GM12878 (cell line): ENCODE measurements at regions of chr6 and their contacts with region 1.

Region 1: DNA sequence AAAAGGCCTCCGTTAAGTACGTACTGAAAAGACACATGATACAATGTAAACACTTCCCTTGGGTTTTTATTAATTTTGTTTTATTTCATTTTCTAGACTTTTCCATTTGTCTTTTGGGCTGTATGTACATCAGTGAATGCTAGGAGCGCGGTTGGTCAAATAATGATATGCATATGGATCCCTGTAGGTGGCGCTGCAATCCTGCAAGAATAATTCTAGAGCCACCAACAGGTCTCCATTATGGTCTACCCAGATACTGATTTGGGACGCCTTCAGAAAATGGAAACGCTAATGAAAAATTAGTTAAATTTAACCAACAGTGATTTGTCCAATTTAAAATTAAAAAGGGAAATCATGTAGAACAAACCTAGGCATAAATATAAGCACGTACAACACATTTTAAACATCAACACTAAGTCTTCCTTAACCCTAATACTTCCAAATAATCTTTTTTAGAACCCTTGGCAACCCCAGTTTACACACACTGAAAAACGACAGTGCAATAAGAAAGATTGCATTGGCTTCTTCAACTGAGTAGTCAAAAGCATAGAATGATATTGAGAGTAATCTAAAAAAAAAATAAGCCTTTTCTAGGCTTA is 433.5 kb downstream of the RFPL4B start:
- DNase-seq: peak; percentile 24
- ATAC-seq: peak; percentile 99
- H3K4me3 ChIP-seq: no peak overlapping the region
- H3K27ac ChIP-seq: no peak overlapping the region
- H3K4me1 ChIP-seq: no peaks in the 10 kb centered on the region
- H3K27me3 ChIP-seq: no peaks in the 10 kb centered on the region
- CTCF ChIP-seq: peak; percentile 67 to 82 (median 69)
- EP300 ChIP-seq: no peak
- POLR2A ChIP-seq: no peak
- RAD21 ChIP-seq: peak; percentile 95

Region 2: GRCh38 chr6:112407101-112407590 is 373.5 kb before region 1 on chr6:
- CTCF ChIA-PET with region 1: no interaction called
- POLR2A ChIA-PET with region 1: no interaction called
- RAD21 ChIA-PET with region 1: no interaction called
- SMC1A ChIA-PET with region 1: no interaction called
- in situ Hi-C with region 1: no loop called
- intact Hi-C with region 1: no loop called
- DNase-seq: no peak
- ATAC-seq: no peak
- H3K4me3 ChIP-seq: no peak overlapping the region
- H3K27ac ChIP-seq: no peak overlapping the region
- H3K4me1 ChIP-seq: no peaks in the 10 kb centered on the region
- H3K27me3 ChIP-seq: no peaks in the 10 kb centered on the region
- CTCF ChIP-seq: no peak
- EP300 ChIP-seq: no peak
- POLR2A ChIP-seq: no peak
- RAD21 ChIP-seq: no peak

Region 3: DNA sequence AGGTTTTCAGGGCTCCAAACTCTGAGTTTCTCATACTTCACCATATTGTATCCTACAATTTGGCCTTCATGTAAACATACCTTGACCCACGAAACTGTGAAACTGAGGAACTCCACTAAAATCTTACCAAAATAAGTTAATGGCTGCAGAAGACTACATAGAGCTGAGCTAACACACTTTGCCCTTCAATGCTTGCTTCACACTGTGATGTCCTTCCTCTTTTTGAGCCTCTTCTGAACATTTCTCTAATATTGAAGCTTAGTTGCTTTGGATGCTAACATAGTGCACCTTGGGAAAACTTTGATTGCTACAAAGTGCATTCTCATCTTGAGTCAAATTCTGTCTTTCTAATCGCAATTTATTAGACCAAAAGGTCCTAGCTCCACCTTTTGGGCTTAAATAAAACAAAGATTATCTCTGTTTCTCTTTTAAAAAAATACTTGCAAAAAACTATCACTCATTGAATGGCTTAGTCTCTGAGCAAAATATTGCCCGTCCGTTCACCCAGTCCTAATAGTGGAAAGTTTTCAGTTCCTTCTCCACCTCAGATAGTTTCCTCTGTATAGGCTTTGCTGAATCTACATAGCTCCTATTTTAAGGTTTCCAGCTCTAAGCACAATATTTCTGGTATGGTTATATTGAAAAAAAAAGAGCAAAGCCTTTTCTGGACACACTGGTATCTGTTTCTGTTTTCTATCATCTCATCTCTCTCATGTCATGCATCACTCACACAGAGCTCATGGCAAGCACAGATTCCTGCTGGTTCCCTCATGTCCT is 61.1 kb after region 1 on chr6:
- CTCF ChIA-PET with region 1: interaction called, 3 read pairs
- POLR2A ChIA-PET with region 1: no interaction called
- RAD21 ChIA-PET with region 1: interaction called, 10 read pairs
- SMC1A ChIA-PET with region 1: interaction called, 4 read pairs
- in situ Hi-C with region 1: no loop called
- intact Hi-C with region 1: no loop called
- DNase-seq: peak; percentile 9
- ATAC-seq: peak; percentile 69
- H3K4me3 ChIP-seq: no peak overlapping the region
- H3K27ac ChIP-seq: peak overlapping the region; percentile 24; the same call in 1 of the 2 replicates
- H3K4me1 ChIP-seq: peaks cover 14% of the 10 kb centered on the region
- H3K27me3 ChIP-seq: no peaks in the 10 kb centered on the region
- CTCF ChIP-seq: no peak
- EP300 ChIP-seq: no peak
- POLR2A ChIP-seq: no peak
- RAD21 ChIP-seq: no peak

Region 4: DNA sequence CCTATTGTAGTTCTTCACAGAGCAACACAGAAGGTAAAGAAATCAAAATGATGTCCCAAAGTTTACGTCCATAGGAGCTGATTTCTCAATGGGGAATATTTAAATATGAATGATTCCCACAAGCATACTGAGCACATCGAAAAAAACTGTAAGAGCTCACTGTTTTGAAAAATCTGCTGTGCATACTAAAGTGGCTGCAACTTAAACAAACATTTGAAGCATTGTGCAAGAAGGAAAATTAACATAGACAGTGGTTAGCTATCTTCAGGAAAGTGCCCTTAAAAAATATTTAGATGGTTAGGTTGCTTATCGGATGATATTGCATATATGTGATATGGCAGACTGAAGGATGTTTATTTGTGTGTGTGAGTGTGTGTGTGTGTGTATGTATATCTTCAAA is 314.2 kb after region 1 on chr6:
- CTCF ChIA-PET with region 1: no interaction called
- POLR2A ChIA-PET with region 1: no interaction called
- RAD21 ChIA-PET with region 1: no interaction called
- SMC1A ChIA-PET with region 1: no interaction called
- in situ Hi-C with region 1: no loop called
- intact Hi-C with region 1: loop called (anchors 10 kb)
- DNase-seq: no peak
- ATAC-seq: no peak
- H3K4me3 ChIP-seq: no peak overlapping the region
- H3K27ac ChIP-seq: no peak overlapping the region
- H3K4me1 ChIP-seq: no peaks in the 10 kb centered on the region
- H3K27me3 ChIP-seq: no peaks in the 10 kb centered on the region
- CTCF ChIP-seq: no peak
- EP300 ChIP-seq: no peak
- POLR2A ChIP-seq: no peak
- RAD21 ChIP-seq: no peak